IMR-90 (cell line): ENCODE measurements at regions of chr1 and their contacts with region 1.

Region 1: DNA sequence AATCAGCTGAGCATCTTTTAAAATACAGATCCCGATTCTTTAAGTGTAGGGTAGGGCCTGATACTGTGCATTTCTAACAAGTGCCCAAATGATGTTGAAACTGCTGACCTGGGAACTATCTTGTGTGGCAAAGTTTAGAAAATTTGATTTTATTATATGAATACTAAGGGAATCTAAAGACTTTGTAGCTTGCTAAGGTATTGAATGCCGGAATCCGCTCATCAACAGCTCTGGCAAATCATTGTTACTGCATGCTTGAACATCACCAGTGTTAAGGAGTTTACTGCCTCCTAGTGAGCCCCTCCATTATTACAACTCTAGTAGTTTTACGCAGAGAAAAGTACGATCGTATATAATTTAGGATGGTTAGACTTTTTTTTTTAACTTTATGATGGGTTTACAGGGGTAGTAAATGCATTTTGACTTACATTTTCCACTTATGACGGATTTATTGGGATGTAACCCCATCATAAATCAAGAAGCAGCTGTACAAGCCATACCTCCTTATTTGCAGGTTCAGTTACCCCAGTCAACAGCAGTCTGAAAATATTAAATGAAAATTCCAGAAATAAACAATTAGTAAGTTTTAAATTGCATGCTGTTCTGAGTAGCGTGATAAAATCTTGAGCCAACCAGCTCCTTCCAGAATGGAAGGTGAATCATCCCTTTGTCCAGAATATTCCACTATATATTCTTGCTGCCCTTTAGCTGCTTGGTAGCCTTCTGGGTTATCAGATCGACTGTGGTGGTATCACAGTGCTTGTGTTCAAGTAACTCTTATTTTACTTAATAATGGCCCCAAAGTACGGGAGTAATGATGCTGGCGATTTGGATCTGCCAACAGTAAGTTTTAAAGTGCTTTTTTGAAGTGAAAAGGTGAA is 892 bp downstream of the TYW3 start:
- DNase-seq: peak; percentile 77
- ATAC-seq: peak; percentile 63
- H3K4me3 ChIP-seq: peak overlapping the region; percentile 71
- H3K27ac ChIP-seq: peak overlapping the region; percentile 93
- H3K4me1 ChIP-seq: peaks cover 10% of the 10 kb centered on the region
- H3K27me3 ChIP-seq: no peaks in the 10 kb centered on the region
- CTCF ChIP-seq: peak; percentile 74
- POLR2A ChIP-seq: no peak
- RAD21 ChIP-seq: peak; percentile 47

Region 2: GRCh38 chr1:74012583-74012982 is 721.3 kb before region 1 on chr1:
- CTCF ChIA-PET with region 1: no interaction called
- POLR2A ChIA-PET with region 1: no interaction called
- dilution Hi-C with region 1: no loop called
- in situ Hi-C with region 1: no loop called
- intact Hi-C with region 1: no loop called
- DNase-seq: no peak
- ATAC-seq: no peak
- H3K4me3 ChIP-seq: no peak overlapping the region
- H3K27ac ChIP-seq: no peak overlapping the region
- H3K4me1 ChIP-seq: no peaks in the 10 kb centered on the region
- H3K27me3 ChIP-seq: no peaks in the 10 kb centered on the region
- CTCF ChIP-seq: no peak
- POLR2A ChIP-seq: no peak
- RAD21 ChIP-seq: no peak

Region 3: DNA sequence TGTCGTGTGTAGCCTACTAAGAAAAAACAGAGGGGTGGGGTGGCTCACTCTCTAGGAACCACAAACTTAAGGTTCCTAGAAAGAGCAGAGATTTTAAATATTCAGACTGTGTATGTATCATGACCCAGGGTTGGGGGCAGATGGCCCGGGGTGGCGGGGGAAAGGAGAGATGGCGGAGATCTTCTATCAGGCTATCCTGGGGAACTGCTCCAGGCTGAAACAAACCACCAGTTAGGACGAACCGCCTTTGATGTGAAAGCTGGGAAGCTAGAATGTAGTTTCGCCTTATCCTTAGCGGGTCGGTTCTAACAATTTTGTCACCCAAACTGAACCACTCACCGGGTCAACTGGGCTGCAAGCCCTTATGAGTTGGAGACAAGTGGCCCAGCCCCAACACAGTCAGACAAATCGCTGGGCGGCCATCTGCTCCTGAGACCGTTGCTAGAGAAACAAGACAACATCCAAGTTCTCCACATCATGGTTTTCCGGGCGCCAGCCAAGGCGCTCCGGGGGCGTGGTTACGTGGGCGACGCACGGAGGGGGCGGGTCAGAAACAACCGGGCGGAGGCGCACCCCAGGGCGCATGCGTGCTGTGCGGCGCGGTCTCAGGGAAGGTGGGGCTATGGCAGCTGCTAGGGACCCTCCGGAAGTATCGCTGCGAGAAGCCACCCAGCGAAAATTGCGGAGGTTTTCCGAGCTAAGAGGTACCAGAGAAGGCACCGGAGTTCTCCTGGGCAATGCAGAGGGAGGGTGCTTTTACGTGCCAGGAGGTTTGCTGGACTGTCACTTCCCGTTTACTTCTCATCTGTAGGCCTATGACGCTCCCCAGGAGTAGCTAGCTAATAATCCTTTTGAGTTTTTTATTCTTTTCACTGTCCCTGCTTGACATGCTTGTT is 535.9 kb before region 1 on chr1 and contains the starts of genes FPGT and LRRIQ3:
- CTCF ChIA-PET with region 1: no interaction called
- POLR2A ChIA-PET with region 1: no interaction called
- dilution Hi-C with region 1: no loop called
- in situ Hi-C with region 1: loop called (anchors 25 kb)
- intact Hi-C with region 1: no loop called
- DNase-seq: peak; percentile 94
- ATAC-seq: peak; percentile 98
- H3K4me3 ChIP-seq: peak within 1 kb of the TSS; percentile 64
- H3K27ac ChIP-seq: peak within 1 kb of the TSS; percentile 84
- H3K4me1 ChIP-seq: no peaks in the 10 kb centered on the region
- H3K27me3 ChIP-seq: no peaks in the 10 kb centered on the region
- CTCF ChIP-seq: no peak
- POLR2A ChIP-seq: peak; percentile 84
- RAD21 ChIP-seq: no peak
- total RNA-seq, gene FPGT: 13.3 and 23.6 TPM in 2 replicates
- total RNA-seq, gene LRRIQ3: 1.8 and 3.1 TPM in 2 replicates

Region 4: GRCh38 chr1:74586253-74586897 is 147.5 kb before region 1 on chr1:
- CTCF ChIA-PET with region 1: no interaction called
- POLR2A ChIA-PET with region 1: no interaction called
- dilution Hi-C with region 1: no loop called
- in situ Hi-C with region 1: no loop called
- intact Hi-C with region 1: loop called (anchors 10 kb)
- DNase-seq: no peak
- ATAC-seq: no peak
- H3K4me3 ChIP-seq: no peak overlapping the region; the same call in 1 of the 2 replicates
- H3K27ac ChIP-seq: no peak overlapping the region
- H3K4me1 ChIP-seq: no peaks in the 10 kb centered on the region
- H3K27me3 ChIP-seq: no peaks in the 10 kb centered on the region
- CTCF ChIP-seq: no peak
- POLR2A ChIP-seq: no peak
- RAD21 ChIP-seq: no peak

Region 5: DNA sequence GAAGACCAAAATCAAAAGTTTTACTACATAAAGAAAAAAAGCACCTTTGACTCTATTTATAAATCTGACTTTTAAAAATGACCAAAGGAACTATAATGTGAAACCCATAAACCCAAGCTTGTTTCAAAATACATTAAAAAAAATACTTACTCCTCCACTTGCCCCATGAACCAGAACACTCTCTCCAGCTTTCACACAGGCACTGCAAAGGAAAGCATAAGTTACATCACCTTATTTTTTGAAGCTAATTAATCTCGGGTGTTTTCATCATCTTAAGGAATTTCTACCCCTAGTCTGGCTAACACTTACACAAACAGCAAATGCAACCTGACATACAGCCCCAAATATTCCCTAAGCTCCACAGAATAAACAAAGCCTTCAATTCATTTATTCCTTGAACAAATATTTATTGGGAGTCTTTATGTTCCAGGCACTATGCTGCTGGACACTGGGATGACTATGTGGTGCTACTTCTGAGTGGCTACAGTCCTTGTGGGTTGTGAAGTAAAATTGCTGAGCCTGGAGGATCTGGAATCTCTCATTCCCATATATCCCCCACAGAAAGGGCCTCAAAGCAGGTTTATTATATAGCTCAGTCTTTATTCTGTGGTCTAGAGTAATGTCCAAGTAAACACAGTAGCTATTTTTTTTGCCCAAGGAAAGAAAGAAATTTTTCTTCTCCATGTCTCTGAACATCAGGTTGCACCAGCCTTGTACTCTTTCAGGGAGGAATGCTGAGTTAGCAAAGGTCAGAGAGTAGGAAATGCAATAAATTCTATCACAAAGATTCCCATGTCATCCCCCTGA is 19.2 kb before region 1 on chr1:
- CTCF ChIA-PET with region 1: interaction called, 7 read pairs
- POLR2A ChIA-PET with region 1: no interaction called
- dilution Hi-C with region 1: no loop called
- in situ Hi-C with region 1: no loop called
- intact Hi-C with region 1: loop called (anchors 2 kb)
- DNase-seq: peak; percentile 35
- ATAC-seq: peak; percentile 76
- H3K4me3 ChIP-seq: no peak overlapping the region
- H3K27ac ChIP-seq: no peak overlapping the region
- H3K4me1 ChIP-seq: peaks cover 8% of the 10 kb centered on the region
- H3K27me3 ChIP-seq: no peaks in the 10 kb centered on the region
- CTCF ChIP-seq: no peak
- POLR2A ChIP-seq: no peak
- RAD21 ChIP-seq: no peak

Region 6: GRCh38 chr1:74772945-74773344 is 39.1 kb after region 1 on chr1:
- CTCF ChIA-PET with region 1: no interaction called
- POLR2A ChIA-PET with region 1: no interaction called
- dilution Hi-C with region 1: no loop called
- in situ Hi-C with region 1: no loop called
- intact Hi-C with region 1: no loop called
- DNase-seq: peak; percentile 16
- ATAC-seq: no peak
- H3K4me3 ChIP-seq: no peak overlapping the region
- H3K27ac ChIP-seq: no peak overlapping the region
- H3K4me1 ChIP-seq: no peaks in the 10 kb centered on the region
- H3K27me3 ChIP-seq: no peaks in the 10 kb centered on the region
- CTCF ChIP-seq: no peak
- POLR2A ChIP-seq: no peak
- RAD21 ChIP-seq: no peak